ENCODE measurements at regions of chr7 and their contacts with region 1.

Region 1: DNA sequence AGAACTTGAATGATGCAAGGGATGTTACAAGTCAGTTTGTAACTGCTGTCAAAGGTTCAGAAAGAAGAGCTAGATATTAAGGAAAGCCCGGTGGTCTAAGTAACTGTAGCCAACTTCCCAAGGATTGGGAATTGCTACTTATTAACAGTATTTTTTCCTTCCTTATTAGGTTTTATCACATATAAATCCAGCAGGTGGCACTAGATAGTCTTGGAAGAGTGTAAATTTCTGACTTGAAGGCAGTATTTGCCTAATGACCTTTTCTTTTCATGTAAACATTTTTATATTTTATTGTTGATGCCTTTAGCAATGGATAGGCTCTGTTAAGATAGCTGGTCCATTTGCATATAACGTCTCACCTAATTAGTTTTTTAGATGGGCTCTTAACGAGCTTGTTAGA is 51.2 kb downstream of the ANLN start:
- DNase-seq: no peak
- ATAC-seq: no peak
- H3K4me3 Mint-ChIP-seq: no peak overlapping the region
- H3K27ac Mint-ChIP-seq: no peak overlapping the region
- H3K4me1 Mint-ChIP-seq: no peaks in the 10 kb centered on the region
- H3K27me3 Mint-ChIP-seq: no peaks in the 10 kb centered on the region

Region 2: DNA sequence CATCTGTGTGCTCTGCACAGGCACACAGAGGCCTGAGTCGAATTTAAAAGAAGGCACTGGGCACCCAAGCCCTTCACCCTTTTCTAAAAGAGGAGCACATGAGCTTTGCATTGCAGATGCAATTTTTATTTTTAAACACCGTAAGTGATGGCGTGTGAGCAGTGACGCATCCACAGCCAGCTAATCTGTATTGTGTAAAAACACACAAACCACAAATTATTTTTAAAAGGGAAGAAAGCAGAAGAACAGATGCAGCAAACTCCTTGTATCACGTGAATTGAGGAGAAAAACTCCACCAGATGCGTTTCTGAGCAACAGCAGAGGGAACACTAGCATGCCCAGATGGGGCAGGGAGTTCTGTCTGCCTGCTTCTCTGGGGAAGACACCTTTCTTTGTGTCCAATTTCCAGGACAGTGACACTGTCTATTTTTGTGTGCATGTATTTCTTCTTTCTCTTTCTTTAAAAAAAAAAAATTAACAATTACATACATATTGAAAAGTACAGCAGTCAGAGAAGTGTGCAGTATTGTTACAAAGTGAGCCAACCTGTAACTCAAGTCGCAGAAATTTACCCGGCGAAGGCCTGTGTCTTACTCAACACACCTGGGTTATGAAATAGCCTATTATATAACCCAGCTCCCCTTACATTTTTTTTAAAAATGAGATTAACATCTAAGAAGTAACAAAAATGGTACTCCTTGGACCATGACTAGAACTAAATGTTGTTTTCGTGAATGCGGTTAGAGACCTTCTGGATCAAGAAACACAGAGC is 248.6 kb before region 1 on chr7:
- CTCF ChIA-PET with region 1: no interaction called
- POLR2A ChIA-PET with region 1: no interaction called
- intact Hi-C with region 1: no loop called
- DNase-seq: no peak
- ATAC-seq: no peak
- H3K4me3 Mint-ChIP-seq: no peak overlapping the region
- H3K27ac Mint-ChIP-seq: no peak overlapping the region
- H3K4me1 Mint-ChIP-seq: no peaks in the 10 kb centered on the region
- H3K27me3 Mint-ChIP-seq: no peaks in the 10 kb centered on the region

Region 3: DNA sequence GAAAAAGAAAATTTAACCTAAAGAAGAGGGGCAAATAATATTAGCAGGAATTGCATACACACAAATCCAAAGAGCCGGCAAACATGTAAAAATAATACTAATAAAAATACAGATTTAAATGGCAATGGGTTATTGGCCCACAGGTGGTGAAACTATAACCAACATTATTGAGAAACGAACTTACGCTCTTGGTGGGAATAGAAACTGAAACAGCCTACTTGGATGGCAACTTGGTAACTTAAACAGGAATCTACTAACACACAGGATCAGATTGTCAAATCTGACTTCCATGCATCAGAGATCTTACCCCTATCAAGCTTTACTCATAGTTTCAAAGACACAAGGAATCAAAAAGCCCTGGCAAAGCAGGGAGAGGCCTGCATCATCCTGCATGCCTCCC is 15.3 kb after region 1 on chr7:
- CTCF ChIA-PET with region 1: interaction called, 11 read pairs
- POLR2A ChIA-PET with region 1: no interaction called
- intact Hi-C with region 1: no loop called
- DNase-seq: no peak
- ATAC-seq: no peak
- H3K4me3 Mint-ChIP-seq: no peak overlapping the region
- H3K27ac Mint-ChIP-seq: no peak overlapping the region
- H3K4me1 Mint-ChIP-seq: no peaks in the 10 kb centered on the region
- H3K27me3 Mint-ChIP-seq: no peaks in the 10 kb centered on the region

Region 4: DNA sequence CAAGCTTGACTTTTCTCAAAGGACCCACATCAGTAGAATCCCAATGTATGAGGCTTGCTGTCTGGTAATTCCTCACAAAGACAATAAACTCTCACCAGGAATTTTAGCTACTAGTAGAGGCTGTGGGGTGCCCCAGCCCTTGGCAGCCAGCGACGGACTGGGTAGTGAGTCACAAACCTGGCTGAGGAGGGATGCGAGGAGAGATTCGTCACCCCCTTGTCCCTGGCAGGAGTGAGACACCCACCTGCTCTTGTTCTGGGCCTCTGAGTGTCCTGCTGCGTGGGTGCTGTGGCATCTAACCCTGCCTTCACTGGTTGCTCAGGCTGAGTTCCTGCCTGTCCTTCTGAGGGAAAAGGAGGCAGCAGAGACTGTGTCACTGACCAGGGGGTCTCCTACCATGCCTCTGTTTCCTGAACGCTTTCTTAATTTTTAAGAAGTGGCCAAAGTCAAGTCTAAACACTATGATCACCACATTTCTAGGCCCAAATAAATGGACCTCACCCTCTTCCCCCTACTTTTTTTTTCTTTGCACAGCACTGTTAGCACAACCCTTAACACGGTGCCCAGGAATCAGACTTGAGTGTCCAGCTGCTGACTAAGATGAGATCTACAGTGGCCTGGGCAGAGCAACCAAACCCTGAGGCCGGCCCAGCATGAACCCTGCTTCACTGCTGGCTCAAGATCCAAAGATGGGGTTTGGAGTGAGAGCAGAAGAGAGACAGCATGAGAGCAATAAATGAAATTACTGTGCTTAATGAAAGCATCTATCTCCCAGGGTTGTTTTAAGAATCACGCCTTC is 95.2 kb after region 1 on chr7:
- CTCF ChIA-PET with region 1: no interaction called
- POLR2A ChIA-PET with region 1: no interaction called
- intact Hi-C with region 1: no loop called
- DNase-seq: no peak
- ATAC-seq: no peak
- H3K4me3 Mint-ChIP-seq: no peak overlapping the region
- H3K27ac Mint-ChIP-seq: peak overlapping the region; percentile 45
- H3K4me1 Mint-ChIP-seq: no peaks in the 10 kb centered on the region
- H3K27me3 Mint-ChIP-seq: no peaks in the 10 kb centered on the region

Measured in activated CD4-positive, alpha-beta T cell treated with anti-CD3 and anti-CD28 coated beads for 36 hours (primary cell).